ENCODE measurements at regions of chr18 and their contacts with region 1.

Region 1: DNA sequence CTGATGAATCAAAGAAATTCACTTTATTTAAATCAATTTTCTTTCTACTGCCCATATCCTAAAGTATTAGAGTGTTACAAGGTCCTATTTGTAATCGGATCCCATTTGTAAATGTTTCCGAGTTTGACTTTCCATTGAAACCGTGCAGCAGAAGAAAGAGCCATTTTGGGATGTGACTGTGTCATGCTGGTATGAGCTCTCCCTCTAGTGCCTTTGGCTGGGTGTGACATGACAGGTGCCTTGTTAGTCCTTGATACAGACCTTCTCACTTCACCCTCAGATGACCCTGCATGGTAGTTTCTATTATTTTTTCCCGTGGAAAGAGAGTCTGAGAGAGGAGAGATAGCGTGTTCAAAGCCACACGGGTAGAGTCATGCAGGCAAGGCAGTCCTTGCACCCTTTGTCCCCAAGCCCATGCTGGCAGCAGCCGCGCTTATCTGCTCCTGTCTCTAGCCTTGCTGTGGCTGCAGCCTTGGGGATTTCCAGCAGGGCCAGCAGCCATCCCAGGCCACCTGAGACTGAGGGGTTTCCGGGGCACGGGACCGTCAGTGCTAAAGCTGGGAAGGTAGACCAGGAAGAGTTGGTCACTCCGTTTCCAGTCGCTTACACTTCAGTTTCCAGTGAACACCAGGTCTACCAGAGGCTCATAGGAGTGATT is 21.4 kb downstream of the CHMP1B start:
- DNase-seq: peak; percentile 74
- ATAC-seq: peak; percentile 98
- H3K4me3 ChIP-seq: peak overlapping the region; percentile 33; the same call in 1 of the 2 replicates
- H3K27ac ChIP-seq: no peak overlapping the region
- H3K4me1 ChIP-seq: peaks cover 11% of the 10 kb centered on the region
- H3K27me3 ChIP-seq: no peaks in the 10 kb centered on the region
- CTCF ChIP-seq: peak; percentile 89

Region 2: GRCh38 chr18:11310476-11311086 is 562.0 kb before region 1 on chr18:
- CTCF ChIA-PET with region 1: no interaction called
- POLR2A ChIA-PET with region 1: no interaction called
- intact Hi-C with region 1: loop called (anchors 5 kb)
- DNase-seq: peak; percentile 58
- ATAC-seq: peak; percentile 82
- H3K4me3 ChIP-seq: no peak overlapping the region
- H3K27ac ChIP-seq: no peak overlapping the region
- H3K4me1 ChIP-seq: no peaks in the 10 kb centered on the region
- H3K27me3 ChIP-seq: peaks cover 31% of the 10 kb centered on the region
- CTCF ChIP-seq: peak; percentile 89

Region 3: GRCh38 chr18:11654736-11655605 is 217.6 kb before region 1 on chr18:
- CTCF ChIA-PET with region 1: no interaction called
- POLR2A ChIA-PET with region 1: no interaction called
- intact Hi-C with region 1: loop called (anchors 1 kb)
- DNase-seq: peak; percentile 62
- ATAC-seq: peak; percentile 94
- H3K4me3 ChIP-seq: peak overlapping the region; percentile 6; the same call in 1 of the 2 replicates
- H3K27ac ChIP-seq: no peak overlapping the region
- H3K4me1 ChIP-seq: no peaks in the 10 kb centered on the region
- H3K27me3 ChIP-seq: peaks cover 83% of the 10 kb centered on the region
- CTCF ChIP-seq: peak; percentile 97

Region 4: GRCh38 chr18:11840493-11840892 is 32.1 kb before region 1 on chr18:
- CTCF ChIA-PET with region 1: no interaction called
- POLR2A ChIA-PET with region 1: no interaction called
- intact Hi-C with region 1: no loop called
- DNase-seq: no peak
- ATAC-seq: no peak
- H3K4me3 ChIP-seq: no peak overlapping the region
- H3K27ac ChIP-seq: no peak overlapping the region
- H3K4me1 ChIP-seq: no peaks in the 10 kb centered on the region
- H3K27me3 ChIP-seq: no peaks in the 10 kb centered on the region
- CTCF ChIP-seq: no peak

Region 5: GRCh38 chr18:11851146-11851805 is 21.3 kb before region 1 on chr18 and contains the start of gene CHMP1B:
- CTCF ChIA-PET with region 1: interaction called, 3 read pairs
- POLR2A ChIA-PET with region 1: no interaction called
- intact Hi-C with region 1: loop called (anchors 2 kb)
- DNase-seq: peak; percentile 97
- ATAC-seq: peak; percentile 84
- H3K4me3 ChIP-seq: peak within 1 kb of the TSS; percentile 91
- H3K27ac ChIP-seq: peak within 1 kb of the TSS; percentile 96
- H3K4me1 ChIP-seq: peaks cover 35% of the 10 kb centered on the region
- H3K27me3 ChIP-seq: no peaks in the 10 kb centered on the region
- CTCF ChIP-seq: no peak
- total RNA-seq, gene CHMP1B: 81.9 and 89.5 TPM in 2 replicates

Region 6: GRCh38 chr18:11857177-11857887 is 15.3 kb before region 1 on chr18:
- CTCF ChIA-PET with region 1: interaction called, 3 read pairs
- POLR2A ChIA-PET with region 1: no interaction called
- intact Hi-C with region 1: loop called (anchors 1 kb)
- DNase-seq: peak; percentile 99
- ATAC-seq: peak; percentile 71
- H3K4me3 ChIP-seq: peak overlapping the region; percentile 7; the same call in 1 of the 2 replicates
- H3K27ac ChIP-seq: peak overlapping the region; percentile 96
- H3K4me1 ChIP-seq: peaks cover 55% of the 10 kb centered on the region
- H3K27me3 ChIP-seq: no peaks in the 10 kb centered on the region
- CTCF ChIP-seq: no peak